ENCODE measurements at regions of chr1 and their contacts with region 1.

Region 1: GRCh38 chr1:45569962-45570581 is 13.8 kb upstream of the NASP start:
- DNase-seq: peak in 3 of 4 donors; percentile 63 to 76 (median 63)
- ATAC-seq: peak; percentile 98
- H3K4me3 ChIP-seq: no peak overlapping the region
- H3K27ac ChIP-seq: no peak overlapping the region
- H3K4me1 ChIP-seq: peaks cover 0 to 3% of the 10 kb centered on the region in 2 donors
- H3K27me3 ChIP-seq: no peaks in the 10 kb centered on the region
- CTCF ChIP-seq: peak; percentile 94 to 97

Region 2: GRCh38 chr1:45339789-45340570 is 230.1 kb before region 1 on chr1 and contains the starts of genes MUTYH and TOE1:
- intact Hi-C with region 1: loop called in 1 of 2 experiments (anchors 10 kb)
- DNase-seq: peak; percentile 85 to 99 (median 93)
- ATAC-seq: peak; percentile 96
- H3K4me3 ChIP-seq: peak within 1 kb of the TSS; percentile 74 to 89
- H3K27ac ChIP-seq: peak within 1 kb of the TSS; percentile 95 to 97
- H3K4me1 ChIP-seq: peaks cover 8 to 39% of the 10 kb centered on the region in 2 donors
- H3K27me3 ChIP-seq: no peaks in the 10 kb centered on the region
- CTCF ChIP-seq: no peak
- polyA plus RNA-seq, gene MUTYH: 25.9 to 33.6 (median 28.5) TPM
- polyA plus RNA-seq, gene TOE1: 10.6 to 14.3 (median 12.9) TPM

Region 3: GRCh38 chr1:45359882-45360513 is 210.1 kb before region 1 on chr1:
- intact Hi-C with region 1: loop called in 1 of 2 experiments (anchors 10 kb)
- DNase-seq: peak in 3 of 4 donors; percentile 58 to 82 (median 71)
- ATAC-seq: peak; percentile 89
- H3K4me3 ChIP-seq: no peak overlapping the region
- H3K27ac ChIP-seq: peak overlapping the region; percentile 60 to 66
- H3K4me1 ChIP-seq: peaks cover 10 to 20% of the 10 kb centered on the region in 2 donors
- H3K27me3 ChIP-seq: no peaks in the 10 kb centered on the region
- CTCF ChIP-seq: peak; percentile 48 to 52

Region 4: GRCh38 chr1:45490626-45491486 is 79.2 kb before region 1 on chr1 and contains the start of gene TESK2:
- intact Hi-C with region 1: no loop called
- DNase-seq: peak; percentile 96 to 99 (median 98)
- ATAC-seq: peak; percentile 98
- H3K4me3 ChIP-seq: peak within 1 kb of the TSS; percentile 77 to 90
- H3K27ac ChIP-seq: peak within 1 kb of the TSS; percentile 76 to 81
- H3K4me1 ChIP-seq: peaks cover 5 to 24% of the 10 kb centered on the region in 2 donors
- H3K27me3 ChIP-seq: no peaks in the 10 kb centered on the region
- CTCF ChIP-seq: peak; percentile 15 to 50
- polyA plus RNA-seq, gene TESK2: 8.5 to 12.5 (median 10.2) TPM

Region 5: GRCh38 chr1:45512641-45513054 is 57.4 kb before region 1 on chr1:
- intact Hi-C with region 1: loop called (anchors 5 to 10 kb)
- DNase-seq: peak in 2 of 4 donors; percentile 51 to 57
- ATAC-seq: peak; percentile 84
- H3K4me3 ChIP-seq: no peak overlapping the region
- H3K27ac ChIP-seq: no peak overlapping the region
- H3K4me1 ChIP-seq: peaks cover 11 to 44% of the 10 kb centered on the region in 2 donors
- H3K27me3 ChIP-seq: no peaks in the 10 kb centered on the region
- CTCF ChIP-seq: peak; percentile 66 to 71

Measured in left lung (tissue), 14 donors.